ENCODE measurements at regions of chr17 and their contacts with region 1.

Region 1: GRCh38 chr17:14245020-14245419 is 8.4 kb upstream of the CDRT15 start:
- DNase-seq: no peak
- ATAC-seq: no peak
- H3K4me3 ChIP-seq: no peak overlapping the region
- H3K4me3 Mint-ChIP-seq: no peak overlapping the region
- H3K27ac ChIP-seq: no peak overlapping the region
- H3K27ac Mint-ChIP-seq: no peak overlapping the region
- H3K4me1 ChIP-seq: no peaks in the 10 kb centered on the region
- H3K4me1 Mint-ChIP-seq: no peaks in the 10 kb centered on the region
- H3K27me3 ChIP-seq: no peaks in the 10 kb centered on the region
- H3K27me3 Mint-ChIP-seq: peaks cover 2% of the 10 kb centered on the region
- CTCF ChIP-seq: no peak

Region 2: DNA sequence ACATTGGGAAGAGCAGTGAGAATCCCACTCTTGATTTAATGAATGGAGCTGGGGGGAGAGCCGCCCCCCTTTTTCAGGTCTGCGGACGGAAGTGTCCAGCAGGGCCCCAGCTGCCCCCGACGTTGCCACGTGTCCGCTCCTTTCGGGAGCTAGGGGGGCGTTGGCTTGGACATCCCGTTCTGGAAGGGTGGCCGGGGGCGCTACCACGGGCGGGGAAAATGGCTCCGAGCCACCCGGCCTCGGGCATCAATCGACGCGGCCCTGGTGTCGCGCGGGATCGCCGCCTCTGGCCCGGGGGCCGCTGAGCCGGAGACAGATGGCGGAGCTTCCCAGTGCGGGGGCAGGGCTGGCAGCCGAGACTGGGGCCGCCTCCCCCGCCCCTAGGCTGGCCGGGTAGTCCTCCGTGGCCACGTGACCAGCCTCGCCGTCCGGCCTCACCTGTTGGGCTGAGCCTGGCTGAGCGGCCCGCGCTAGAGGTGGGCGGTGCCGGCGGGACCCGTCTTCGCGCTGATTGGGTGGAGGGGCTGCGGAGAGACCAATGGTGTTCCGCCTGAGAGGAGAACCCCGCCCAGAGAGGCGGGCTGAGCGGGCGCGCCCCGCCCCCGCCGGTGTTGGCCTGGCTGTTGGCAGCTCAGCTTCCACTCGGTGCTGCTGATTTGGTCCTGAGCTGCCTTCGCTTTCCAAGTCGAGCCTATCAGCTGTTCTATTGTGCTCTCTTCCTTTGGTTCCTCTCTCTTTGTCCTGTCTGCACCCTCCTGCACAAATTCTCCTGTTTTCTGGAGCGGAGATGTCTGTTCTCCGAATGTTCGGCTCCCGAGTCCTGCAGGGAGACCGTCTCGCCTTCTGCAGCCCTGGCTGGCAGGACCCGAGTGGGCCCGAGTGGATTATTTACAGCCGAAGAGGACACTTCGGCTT is 64.2 kb after region 1 on chr17:
- CTCF ChIA-PET with region 1: no interaction called
- POLR2A ChIA-PET with region 1: no interaction called
- intact Hi-C with region 1: no loop called
- DNase-seq: peak; percentile 79 to 92 (median 90)
- ATAC-seq: peak; percentile 100
- H3K4me3 ChIP-seq: peak overlapping the region; percentile 41 to 52
- H3K4me3 Mint-ChIP-seq: peak overlapping the region; percentile 83
- H3K27ac ChIP-seq: peak overlapping the region in 1 of 2 experiments; percentile 41
- H3K27ac Mint-ChIP-seq: peak overlapping the region; percentile 29
- H3K4me1 ChIP-seq: peaks cover 39% of the 10 kb centered on the region
- H3K4me1 Mint-ChIP-seq: peaks cover 66% of the 10 kb centered on the region
- H3K27me3 ChIP-seq: no peaks in the 10 kb centered on the region
- H3K27me3 Mint-ChIP-seq: no peaks in the 10 kb centered on the region
- CTCF ChIP-seq: no peak

Region 3: GRCh38 chr17:14699574-14700180 is 454.7 kb after region 1 on chr17:
- CTCF ChIA-PET with region 1: no interaction called
- POLR2A ChIA-PET with region 1: no interaction called
- intact Hi-C with region 1: loop called in 1 of 2 experiments (anchors 10 kb)
- DNase-seq: no peak
- ATAC-seq: no peak
- H3K4me3 ChIP-seq: no peak overlapping the region
- H3K4me3 Mint-ChIP-seq: no peak overlapping the region
- H3K27ac ChIP-seq: no peak overlapping the region
- H3K27ac Mint-ChIP-seq: no peak overlapping the region
- H3K4me1 ChIP-seq: no peaks in the 10 kb centered on the region
- H3K4me1 Mint-ChIP-seq: no peaks in the 10 kb centered on the region
- H3K27me3 ChIP-seq: no peaks in the 10 kb centered on the region
- H3K27me3 Mint-ChIP-seq: no peaks in the 10 kb centered on the region
- CTCF ChIP-seq: no peak

Measured in CD8-positive, alpha-beta T cell (primary cell).